ENCODE measurements at regions of chr11 and their contacts with region 1.

Region 1: DNA sequence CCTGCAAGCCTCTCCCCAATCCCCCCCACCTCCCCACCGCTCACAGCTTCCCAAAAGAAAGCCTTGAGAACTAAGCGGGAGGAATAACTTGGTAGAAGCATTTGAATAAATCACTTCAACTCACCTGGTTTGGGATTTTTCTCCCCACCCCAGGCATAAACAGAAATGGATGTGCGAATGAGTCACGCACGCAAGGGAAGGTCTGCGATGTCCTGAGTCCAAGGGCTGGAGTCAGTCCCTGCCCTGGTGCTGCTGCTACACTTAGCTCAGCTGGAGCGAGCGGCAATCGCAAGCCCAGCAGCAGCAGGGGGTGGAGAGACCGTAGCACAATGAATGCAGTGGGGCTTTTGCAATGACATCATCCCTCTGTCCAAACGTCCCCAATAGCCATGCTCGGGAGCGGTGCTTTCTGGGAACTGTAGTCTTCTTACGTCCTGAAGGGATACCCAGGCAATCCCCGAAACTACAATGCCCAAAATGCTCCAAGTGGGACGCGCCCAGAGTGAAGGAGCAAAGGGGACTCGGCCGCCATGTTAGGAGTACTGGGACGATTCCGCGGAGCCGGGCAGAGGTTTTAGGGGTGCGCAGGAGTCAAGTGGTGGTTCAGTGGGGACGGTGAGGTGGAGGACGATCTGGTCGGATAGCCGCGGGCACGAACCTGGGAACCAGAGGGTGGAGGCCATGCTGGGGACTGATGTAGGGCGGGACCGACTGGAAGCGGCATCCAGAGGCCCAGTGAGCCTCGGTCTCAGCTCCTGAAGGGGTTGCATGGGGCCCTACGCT is at the start of gene RAB30:
- DNase-seq: peak; percentile 100
- ATAC-seq: peak; percentile 98
- H3K4me3 ChIP-seq: peak within 1 kb of the TSS; percentile 82 to 92 (median 89)
- H3K27ac ChIP-seq: peak within 1 kb of the TSS; percentile 88
- H3K4me1 ChIP-seq: peaks cover 60% of the 10 kb centered on the region
- H3K27me3 ChIP-seq: no peaks in the 10 kb centered on the region; a peak in 1 of 5 replicates
- CTCF ChIP-seq: peak; percentile 20; the same call in 1 of the 2 replicates
- EP300 ChIP-seq: peak; percentile 43 to 59; a peak in 3 of 4 replicates
- POLR2A ChIP-seq: peak; percentile 88 to 91
- RAD21 ChIP-seq: peak; percentile 6; the same call in 1 of the 2 replicates
- total RNA-seq, gene RAB30: 5.0 and 8.8 TPM in 2 replicates

Region 2: DNA sequence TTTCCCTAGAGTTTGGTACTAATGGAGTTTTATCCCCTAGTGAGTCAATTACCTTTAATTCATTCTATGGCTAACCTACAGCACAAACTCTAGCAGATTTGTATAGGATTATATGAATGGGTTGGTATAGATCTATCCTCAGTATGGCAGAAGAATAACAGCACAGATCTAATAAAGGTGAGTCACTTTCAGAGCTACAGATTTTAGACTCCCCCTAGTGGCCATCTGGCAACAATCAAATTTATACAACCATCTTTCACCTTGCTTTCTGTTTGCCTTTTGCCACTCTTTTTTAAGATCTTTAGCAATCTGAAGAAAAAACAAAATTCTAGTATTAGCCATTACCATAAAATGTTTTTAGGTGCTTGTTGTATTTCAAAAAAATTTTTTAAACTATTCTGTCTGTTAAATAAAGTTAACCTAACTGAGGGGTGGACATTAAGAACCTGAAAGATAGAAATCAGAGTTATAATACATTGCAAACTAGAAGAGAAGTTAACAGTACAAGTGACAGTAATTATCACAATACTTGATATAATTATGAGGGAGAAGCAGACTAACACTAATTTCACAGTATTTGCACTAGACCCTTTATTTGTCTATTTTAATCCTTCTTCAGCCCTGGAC is 144.4 kb before region 1 on chr11:
- CTCF ChIA-PET with region 1: no interaction called
- POLR2A ChIA-PET with region 1: no interaction called
- in situ Hi-C with region 1: no loop called
- intact Hi-C with region 1: loop called (anchors 5 kb)
- DNase-seq: peak; percentile 43
- ATAC-seq: peak; percentile 81
- H3K4me3 ChIP-seq: no peak overlapping the region
- H3K27ac ChIP-seq: no peak overlapping the region
- H3K4me1 ChIP-seq: no peaks in the 10 kb centered on the region
- H3K27me3 ChIP-seq: no peaks in the 10 kb centered on the region
- CTCF ChIP-seq: peak; percentile 66
- EP300 ChIP-seq: no peak
- POLR2A ChIP-seq: no peak
- RAD21 ChIP-seq: no peak

Region 3: DNA sequence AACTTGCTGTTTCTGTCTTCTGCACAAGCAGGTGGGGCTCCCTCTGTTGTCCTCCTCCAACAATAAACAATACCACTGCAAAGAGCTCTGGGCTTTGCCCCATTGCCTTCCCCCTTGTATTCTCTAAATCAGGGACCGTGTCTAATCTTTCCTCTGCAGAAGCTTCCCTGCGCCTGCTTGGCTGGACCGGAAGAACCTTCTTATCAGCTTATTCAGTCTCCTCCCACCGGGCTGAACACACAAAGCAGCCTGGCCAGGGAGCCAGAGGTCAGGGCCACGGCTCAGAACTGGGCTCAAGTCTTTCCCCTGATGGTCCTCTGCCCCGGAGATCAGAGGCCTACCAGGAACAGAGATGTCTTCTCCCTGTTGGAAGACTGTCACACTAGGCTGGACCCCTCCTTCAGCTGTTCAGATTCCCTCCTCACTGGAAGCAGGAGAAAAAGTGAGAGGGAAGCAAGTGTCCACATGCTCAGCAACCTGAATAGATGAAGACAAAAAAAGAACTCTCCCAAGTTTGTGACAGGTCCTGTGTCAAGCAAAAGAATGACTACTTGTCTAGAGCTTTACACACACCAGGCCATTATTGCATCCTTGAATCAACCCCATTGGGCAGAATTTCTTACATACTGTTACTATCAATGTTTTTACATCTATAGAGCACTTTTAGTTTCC is 63.7 kb before region 1 on chr11:
- CTCF ChIA-PET with region 1: no interaction called
- POLR2A ChIA-PET with region 1: interaction called, 41 read pairs
- in situ Hi-C with region 1: no loop called
- intact Hi-C with region 1: loop called (anchors 1 kb)
- DNase-seq: peak; percentile 88
- ATAC-seq: peak; percentile 96
- H3K4me3 ChIP-seq: peak overlapping the region; percentile 16 to 40 (median 40)
- H3K27ac ChIP-seq: peak overlapping the region; percentile 72
- H3K4me1 ChIP-seq: peaks cover 71% of the 10 kb centered on the region
- H3K27me3 ChIP-seq: no peaks in the 10 kb centered on the region
- CTCF ChIP-seq: peak; percentile 42
- EP300 ChIP-seq: peak in 1 of 2 experiments; percentile 93; a peak in 2 of 4 replicates
- POLR2A ChIP-seq: no peak
- RAD21 ChIP-seq: peak; percentile 15; the same call in 1 of the 2 replicates

Region 4: DNA sequence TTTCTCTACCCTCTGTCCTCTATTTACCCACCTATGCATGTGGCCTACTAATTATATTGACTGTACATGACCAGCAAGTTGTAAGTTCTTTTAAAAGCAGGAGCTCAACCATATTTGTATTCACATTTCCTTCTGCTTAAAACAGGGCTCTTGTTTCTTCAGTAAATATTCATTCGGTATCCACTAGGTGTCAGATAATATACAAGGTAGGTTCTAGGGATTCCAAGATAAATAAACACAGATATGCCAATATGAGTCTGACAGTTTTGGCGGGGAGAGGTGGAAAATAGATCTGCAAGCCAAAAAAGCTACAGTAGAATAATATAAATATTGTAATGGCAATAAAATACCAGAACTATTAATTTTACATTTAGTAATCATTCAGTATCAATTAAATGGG is 15.3 kb after region 1 on chr11:
- CTCF ChIA-PET with region 1: no interaction called
- POLR2A ChIA-PET with region 1: interaction called, 29 read pairs
- in situ Hi-C with region 1: no loop called
- intact Hi-C with region 1: no loop called
- DNase-seq: peak; percentile 39
- ATAC-seq: peak; percentile 43; the same call in 2 of the 3 replicates
- H3K4me3 ChIP-seq: no peak overlapping the region
- H3K27ac ChIP-seq: no peak overlapping the region
- H3K4me1 ChIP-seq: peaks cover 20% of the 10 kb centered on the region
- H3K27me3 ChIP-seq: no peaks in the 10 kb centered on the region
- CTCF ChIP-seq: peak; percentile 31; the same call in 1 of the 2 replicates
- EP300 ChIP-seq: no peak
- POLR2A ChIP-seq: no peak
- RAD21 ChIP-seq: 0 out of 2 replicates have a peak, but pooled peaks have one; percentile 45

Region 5: GRCh38 chr11:83115551-83115950 is 43.8 kb after region 1 on chr11:
- CTCF ChIA-PET with region 1: no interaction called
- POLR2A ChIA-PET with region 1: interaction called, 6 read pairs
- in situ Hi-C with region 1: no loop called
- intact Hi-C with region 1: loop called (anchors 5 kb)
- DNase-seq: peak; percentile 66
- ATAC-seq: peak; percentile 97
- H3K4me3 ChIP-seq: peak overlapping the region; percentile 18 to 51 (median 47); a peak in 5 of 6 replicates
- H3K27ac ChIP-seq: peak overlapping the region; percentile 27
- H3K4me1 ChIP-seq: peaks cover 52% of the 10 kb centered on the region
- H3K27me3 ChIP-seq: no peaks in the 10 kb centered on the region
- CTCF ChIP-seq: peak; percentile 55
- EP300 ChIP-seq: no peak
- POLR2A ChIP-seq: no peak
- RAD21 ChIP-seq: no peak

Measured in HepG2 (cell line).